ENCODE measurements at regions of chr11 and their contacts with region 1.

Region 1: DNA sequence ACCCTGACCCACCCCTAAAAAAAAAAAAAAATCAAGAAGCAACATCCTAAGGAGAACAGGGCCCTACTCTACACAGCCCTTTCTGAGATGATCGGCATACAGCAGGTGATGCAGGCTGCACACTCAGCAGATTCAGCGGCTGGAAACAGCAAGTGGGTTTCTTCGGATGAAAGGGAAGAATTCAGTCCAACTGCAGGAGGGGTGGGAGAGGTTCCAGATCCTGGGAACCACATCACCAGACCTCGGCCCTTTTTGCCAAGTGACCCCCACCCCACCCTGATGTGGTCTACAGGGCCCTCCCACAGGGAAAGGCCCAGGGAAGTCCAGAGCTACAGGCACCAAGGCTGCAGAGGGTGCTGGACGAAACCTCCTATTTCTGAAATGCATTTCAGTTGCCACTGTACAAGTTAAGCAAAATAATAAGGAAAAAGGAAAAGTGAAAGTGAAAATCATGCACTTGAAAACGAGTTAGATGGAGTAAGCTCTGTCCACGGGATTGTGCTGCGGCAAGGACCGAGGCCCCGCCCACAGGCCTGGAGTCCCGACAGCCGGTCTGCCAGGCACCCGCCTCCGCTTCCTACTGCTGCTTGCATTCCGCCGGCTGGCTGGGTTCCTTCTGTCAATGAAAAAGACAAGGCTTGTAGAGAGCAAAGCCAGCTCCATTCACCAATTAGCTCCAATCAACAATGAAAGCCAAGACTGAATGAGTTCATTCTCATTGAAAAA is 16.0 kb upstream of the PHLDA2 start:
- DNase-seq: peak; percentile 83 to 95 (median 94)
- H3K4me3 ChIP-seq: peak overlapping the region in 3 of 7 experiments; percentile 30 to 54 (median 54)
- H3K27ac ChIP-seq: peak overlapping the region in 1 of 2 experiments; percentile 56
- H3K4me1 ChIP-seq: peaks cover 0 to 39% (median 26%) of the 10 kb centered on the region in 4 experiments
- H3K27me3 ChIP-seq: no peaks in the 10 kb centered on the region

Region 2: DNA sequence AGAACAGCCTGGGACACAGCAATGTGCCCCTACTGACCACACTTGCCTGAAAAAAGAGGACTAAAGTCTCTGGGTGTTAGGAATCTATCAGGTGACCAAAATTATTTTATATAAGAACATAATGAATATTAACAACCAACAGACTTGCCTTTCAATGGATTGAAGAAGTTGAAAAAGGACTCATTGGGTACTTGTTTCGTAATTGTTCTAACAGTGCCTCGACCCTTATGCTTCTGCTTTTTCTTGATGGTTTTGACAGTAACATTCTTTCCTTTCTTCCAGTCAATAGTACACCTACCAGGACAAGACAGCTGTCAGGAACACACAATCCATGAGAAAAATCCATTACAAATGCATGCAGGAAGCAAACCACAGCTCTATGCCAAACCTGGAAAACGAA is 13.1 kb after region 1 on chr11:
- CTCF ChIA-PET with region 1: interaction called, 12 read pairs
- POLR2A ChIA-PET with region 1: interaction called, 3 read pairs
- DNase-seq: no peak
- H3K4me3 ChIP-seq: no peak overlapping the region
- H3K27ac ChIP-seq: no peak overlapping the region
- H3K4me1 ChIP-seq: peaks cover 0 to 2% (median 0%) of the 10 kb centered on the region in 4 experiments
- H3K27me3 ChIP-seq: no peaks in the 10 kb centered on the region

Measured in common myeloid progenitor, CD34-positive (primary cell).